ENCODE measurements at regions of chr7 and their contacts with region 1.

Region 1: GRCh38 chr7:4189131-4189570 is 492.9 kb upstream of the FOXK1 start:
- DNase-seq: peak; percentile 86
- H3K4me3 Mint-ChIP-seq: peak overlapping the region; percentile 50
- H3K27ac Mint-ChIP-seq: peak overlapping the region; percentile 15
- H3K4me1 Mint-ChIP-seq: peaks cover 31% of the 10 kb centered on the region
- H3K27me3 Mint-ChIP-seq: no peaks in the 10 kb centered on the region
- CTCF ChIP-seq: no peak

Region 2: GRCh38 chr7:4025694-4026615 is 163.2 kb before region 1 on chr7:
- CTCF ChIA-PET with region 1: no interaction called
- intact Hi-C with region 1: no loop called
- DNase-seq: no peak
- H3K4me3 Mint-ChIP-seq: no peak overlapping the region
- H3K27ac Mint-ChIP-seq: no peak overlapping the region
- H3K4me1 Mint-ChIP-seq: no peaks in the 10 kb centered on the region
- H3K27me3 Mint-ChIP-seq: no peaks in the 10 kb centered on the region
- CTCF ChIP-seq: no peak

Region 3: GRCh38 chr7:4159761-4160554 is 29.2 kb before region 1 on chr7:
- CTCF ChIA-PET with region 1: interaction called, 12 read pairs
- intact Hi-C with region 1: no loop called
- DNase-seq: peak; percentile 29
- H3K4me3 Mint-ChIP-seq: no peak overlapping the region
- H3K27ac Mint-ChIP-seq: peak overlapping the region; percentile 5
- H3K4me1 Mint-ChIP-seq: peaks cover 20% of the 10 kb centered on the region
- H3K27me3 Mint-ChIP-seq: no peaks in the 10 kb centered on the region
- CTCF ChIP-seq: peak; percentile 33

Region 4: DNA sequence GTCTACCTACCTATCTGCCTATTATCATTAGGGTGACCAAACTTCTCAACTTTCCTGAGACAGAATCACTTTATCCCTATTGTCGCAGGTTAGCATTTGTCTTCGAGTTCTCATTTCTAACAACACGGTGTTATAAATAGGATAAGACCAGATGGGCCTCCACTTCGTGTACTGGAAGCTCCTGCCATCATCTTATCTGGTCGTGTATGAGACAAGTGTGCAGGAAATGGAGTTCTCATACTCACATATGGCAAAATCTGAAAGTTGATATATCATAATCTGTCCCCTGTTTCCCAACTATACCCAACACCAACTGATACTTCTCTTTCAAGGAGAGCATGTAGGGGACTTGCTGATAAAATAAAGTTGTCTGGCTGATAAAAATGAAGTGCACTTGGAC is 205.6 kb after region 1 on chr7:
- CTCF ChIA-PET with region 1: no interaction called
- intact Hi-C with region 1: no loop called
- DNase-seq: no peak
- H3K4me3 Mint-ChIP-seq: no peak overlapping the region
- H3K27ac Mint-ChIP-seq: no peak overlapping the region
- H3K4me1 Mint-ChIP-seq: no peaks in the 10 kb centered on the region
- H3K27me3 Mint-ChIP-seq: peaks cover 33% of the 10 kb centered on the region
- CTCF ChIP-seq: no peak